Heart left ventricle (tissue), 16 donors: ENCODE measurements at regions of chr16 and their contacts with region 1.

Region 1: GRCh38 chr16:30984669-30985400 is at the start of gene HSD3B7:
- DNase-seq: peak; percentile 90 to 95 (median 90)
- ATAC-seq: peak; percentile 83 to 91 (median 88)
- H3K4me3 ChIP-seq: peak within 1 kb of the TSS in 11 of 12 donors; percentile 24 to 79 (median 61)
- H3K27ac ChIP-seq: peak within 1 kb of the TSS in 10 of 12 donors; percentile 26 to 82 (median 66)
- H3K4me1 ChIP-seq: peaks cover 0 to 21% (median 11%) of the 10 kb centered on the region in 12 donors
- H3K27me3 ChIP-seq: no peaks in the 10 kb centered on the region
- CTCF ChIP-seq: peak; percentile 92 to 97 (median 96)
- POLR2A ChIP-seq: peak in 1 of 2 donors; percentile 32
- total RNA-seq, gene HSD3B7: 3.8 to 27.2 (median 6.9) TPM

Region 2: GRCh38 chr16:31052124-31052523 is 67.3 kb after region 1 on chr16:
- intact Hi-C with region 1: no loop called
- DNase-seq: no peak
- ATAC-seq: peak in 2 of 4 donors; percentile 75 to 77
- H3K4me3 ChIP-seq: no peak overlapping the region
- H3K27ac ChIP-seq: peak overlapping the region in 1 of 12 donors; percentile 32
- H3K4me1 ChIP-seq: peaks cover 0 to 9% (median 0%) of the 10 kb centered on the region in 12 donors
- H3K27me3 ChIP-seq: no peaks in the 10 kb centered on the region
- CTCF ChIP-seq: no peak
- POLR2A ChIP-seq: no peak

Region 3: DNA sequence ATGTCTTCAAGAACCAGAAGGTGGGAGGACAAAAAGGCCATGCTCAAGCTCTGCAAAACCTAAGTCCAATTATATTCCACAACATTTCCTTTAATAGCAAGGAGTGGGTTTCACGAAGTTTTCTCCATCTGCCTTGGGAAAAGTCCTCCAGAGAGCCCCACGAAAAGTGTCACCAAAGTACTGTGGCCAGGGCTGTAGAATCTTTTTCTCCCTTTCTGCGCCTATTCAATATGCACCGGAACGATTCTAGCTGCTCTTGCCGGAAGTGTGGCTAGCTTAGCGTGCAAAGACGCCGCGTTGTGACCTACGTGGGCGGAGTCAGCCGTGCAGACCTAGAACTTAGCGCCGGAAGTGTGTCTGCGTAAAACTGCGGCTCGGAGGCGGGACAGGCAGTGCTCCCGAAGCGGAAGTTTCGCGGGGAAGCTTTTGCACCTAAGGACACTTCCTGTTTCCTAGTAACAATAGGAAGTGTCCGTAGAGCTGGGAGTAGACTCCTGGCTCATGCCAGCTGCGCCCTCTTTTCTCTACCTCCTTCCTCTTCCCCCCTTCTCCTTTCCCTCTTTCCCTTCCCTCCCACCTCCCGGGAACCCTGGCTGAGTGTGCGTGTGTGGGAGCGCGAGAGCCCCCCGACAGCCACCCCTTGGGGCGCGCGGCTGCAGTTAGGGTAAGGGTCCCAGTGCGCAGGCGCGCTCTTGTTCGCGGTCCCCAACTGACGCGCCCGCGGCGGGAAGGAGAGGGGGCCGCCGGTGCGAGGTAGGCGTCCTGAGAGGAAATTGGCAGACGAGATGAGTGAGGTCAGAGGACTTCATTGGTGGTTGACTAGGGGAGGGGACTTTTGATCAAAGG is 89.4 kb after region 1 on chr16 and contains the starts of genes ZNF646 and ZNF668:
- intact Hi-C with region 1: loop called in 4 of 10 experiments (anchors 5 to 10 kb)
- DNase-seq: peak; percentile 98 to 99 (median 99)
- ATAC-seq: peak; percentile 94 to 97 (median 96)
- H3K4me3 ChIP-seq: peak within 1 kb of the TSS; percentile 66 to 100 (median 84)
- H3K27ac ChIP-seq: peak within 1 kb of the TSS; percentile 87 to 99 (median 96)
- H3K4me1 ChIP-seq: peaks cover 3 to 39% (median 24%) of the 10 kb centered on the region in 12 donors
- H3K27me3 ChIP-seq: no peaks in the 10 kb centered on the region
- CTCF ChIP-seq: peak in 1 of 12 donors; percentile 8
- POLR2A ChIP-seq: peak in 1 of 2 donors; percentile 65
- total RNA-seq, gene ZNF646: 8.3 to 15.5 (median 10.3) TPM
- total RNA-seq, gene ZNF668: 3.5 to 11.4 (median 5.8) TPM

Region 4: DNA sequence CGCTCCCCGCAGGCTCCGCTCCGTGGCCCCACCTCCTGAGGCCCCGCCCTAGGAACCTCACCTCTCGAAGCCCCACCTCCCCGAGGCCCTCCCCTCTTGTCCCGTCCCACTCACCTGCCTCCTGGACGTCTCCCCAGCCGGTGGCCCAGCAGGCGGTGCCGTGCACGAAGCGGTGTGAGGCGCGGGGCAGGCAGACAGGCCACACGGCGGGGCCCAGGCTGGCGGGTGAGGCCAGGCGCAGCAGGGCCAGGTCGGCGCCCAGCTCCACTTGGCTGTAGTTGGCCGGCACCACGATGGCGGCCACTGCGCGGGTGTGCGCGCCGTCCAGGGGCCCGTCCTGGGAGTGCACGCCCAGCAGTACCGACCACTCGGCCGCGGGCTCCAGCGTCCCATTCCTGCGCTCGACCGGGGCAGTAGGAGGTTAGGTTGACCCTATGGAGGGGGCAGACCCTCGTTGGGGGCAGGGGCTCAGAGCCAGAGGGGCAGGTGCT is 163.5 kb after region 1 on chr16:
- intact Hi-C with region 1: loop called in 7 of 10 experiments (anchors 2 to 10 kb)
- DNase-seq: no peak
- ATAC-seq: peak in 2 of 4 donors; percentile 40 to 53
- H3K4me3 ChIP-seq: peak overlapping the region in 1 of 12 donors; percentile 20
- H3K27ac ChIP-seq: no peak overlapping the region
- H3K4me1 ChIP-seq: peaks cover 0 to 30% (median 0%) of the 10 kb centered on the region in 12 donors
- H3K27me3 ChIP-seq: peaks cover 0 to 15% (median 7%) of the 10 kb centered on the region in 9 donors
- CTCF ChIP-seq: no peak
- POLR2A ChIP-seq: no peak

Region 5: GRCh38 chr16:31440516-31441184 is 455.8 kb after region 1 on chr16:
- intact Hi-C with region 1: loop called in 9 of 10 experiments (anchors 1 to 5 kb)
- DNase-seq: no peak
- ATAC-seq: no peak
- H3K4me3 ChIP-seq: no peak overlapping the region
- H3K27ac ChIP-seq: peak overlapping the region in 9 of 12 donors; percentile 17 to 80 (median 46)
- H3K4me1 ChIP-seq: peaks cover 0 to 29% (median 11%) of the 10 kb centered on the region in 12 donors
- H3K27me3 ChIP-seq: no peaks in the 10 kb centered on the region
- CTCF ChIP-seq: no peak
- POLR2A ChIP-seq: no peak

Region 6: GRCh38 chr16:31873556-31874365 is 888.9 kb after region 1 on chr16 and contains the start of gene ZNF267:
- intact Hi-C with region 1: loop called (anchors 1 to 10 kb)
- DNase-seq: peak; percentile 95 to 97 (median 96)
- ATAC-seq: peak; percentile 91 to 97 (median 94)
- H3K4me3 ChIP-seq: peak within 1 kb of the TSS; percentile 72 to 100 (median 94)
- H3K27ac ChIP-seq: peak within 1 kb of the TSS; percentile 24 to 98 (median 86)
- H3K4me1 ChIP-seq: peaks cover 3 to 74% (median 29%) of the 10 kb centered on the region in 12 donors
- H3K27me3 ChIP-seq: no peaks in the 10 kb centered on the region
- CTCF ChIP-seq: no peak
- POLR2A ChIP-seq: peak in 1 of 2 donors; percentile 71
- total RNA-seq, gene ZNF267: 3.1 to 22.6 (median 5.3) TPM